HepG2 (cell line): ENCODE measurements at regions of chr15 and their contacts with region 1.

Region 1: GRCh38 chr15:74322181-74323076 is 45.0 kb downstream of the CYP11A1 start:
- DNase-seq: peak; percentile 41
- ATAC-seq: peak; percentile 92
- H3K4me3 ChIP-seq: no peak overlapping the region
- H3K27ac ChIP-seq: no peak overlapping the region
- H3K4me1 ChIP-seq: no peaks in the 10 kb centered on the region
- H3K27me3 ChIP-seq: peaks cover 3 to 4% of the 10 kb centered on the region in 2 experiments; a peak in 2 of 5 replicates
- CTCF ChIP-seq: peak; percentile 96
- EP300 ChIP-seq: no peak
- POLR2A ChIP-seq: no peak
- RAD21 ChIP-seq: peak; percentile 81

Region 2: GRCh38 chr15:74307827-74308644 is 14.4 kb before region 1 on chr15:
- CTCF ChIA-PET with region 1: interaction called, 16 read pairs
- POLR2A ChIA-PET with region 1: no interaction called
- in situ Hi-C with region 1: no loop called
- intact Hi-C with region 1: no loop called
- DNase-seq: peak; percentile 33
- ATAC-seq: peak; percentile 77
- H3K4me3 ChIP-seq: no peak overlapping the region
- H3K27ac ChIP-seq: no peak overlapping the region
- H3K4me1 ChIP-seq: no peaks in the 10 kb centered on the region
- H3K27me3 ChIP-seq: peaks cover 15 to 28% of the 10 kb centered on the region in 2 experiments; a peak in 4 of 5 replicates
- CTCF ChIP-seq: peak; percentile 74
- EP300 ChIP-seq: no peak
- POLR2A ChIP-seq: no peak
- RAD21 ChIP-seq: 0 out of 2 replicates have a peak, but pooled peaks have one; percentile 20

Region 3: GRCh38 chr15:74657846-74658245 is 335.4 kb after region 1 on chr15:
- CTCF ChIA-PET with region 1: no interaction called
- POLR2A ChIA-PET with region 1: no interaction called
- in situ Hi-C with region 1: no loop called
- intact Hi-C with region 1: no loop called
- DNase-seq: no peak
- ATAC-seq: no peak; the same call in 2 of the 3 replicates
- H3K4me3 ChIP-seq: no peak overlapping the region
- H3K27ac ChIP-seq: no peak overlapping the region
- H3K4me1 ChIP-seq: peaks cover 19% of the 10 kb centered on the region
- H3K27me3 ChIP-seq: no peaks in the 10 kb centered on the region
- CTCF ChIP-seq: no peak
- EP300 ChIP-seq: no peak
- POLR2A ChIP-seq: no peak
- RAD21 ChIP-seq: no peak

Region 4: GRCh38 chr15:74683758-74684157 is 361.3 kb after region 1 on chr15:
- CTCF ChIA-PET with region 1: no interaction called
- POLR2A ChIA-PET with region 1: no interaction called
- in situ Hi-C with region 1: no loop called
- intact Hi-C with region 1: no loop called
- DNase-seq: no peak
- ATAC-seq: no peak
- H3K4me3 ChIP-seq: no peak overlapping the region
- H3K27ac ChIP-seq: no peak overlapping the region
- H3K4me1 ChIP-seq: no peaks in the 10 kb centered on the region
- H3K27me3 ChIP-seq: no peaks in the 10 kb centered on the region; a peak in 1 of 5 replicates
- CTCF ChIP-seq: no peak
- EP300 ChIP-seq: no peak
- POLR2A ChIP-seq: no peak
- RAD21 ChIP-seq: no peak